ENCODE measurements at regions of chr7 and their contacts with region 1.

Region 1: DNA sequence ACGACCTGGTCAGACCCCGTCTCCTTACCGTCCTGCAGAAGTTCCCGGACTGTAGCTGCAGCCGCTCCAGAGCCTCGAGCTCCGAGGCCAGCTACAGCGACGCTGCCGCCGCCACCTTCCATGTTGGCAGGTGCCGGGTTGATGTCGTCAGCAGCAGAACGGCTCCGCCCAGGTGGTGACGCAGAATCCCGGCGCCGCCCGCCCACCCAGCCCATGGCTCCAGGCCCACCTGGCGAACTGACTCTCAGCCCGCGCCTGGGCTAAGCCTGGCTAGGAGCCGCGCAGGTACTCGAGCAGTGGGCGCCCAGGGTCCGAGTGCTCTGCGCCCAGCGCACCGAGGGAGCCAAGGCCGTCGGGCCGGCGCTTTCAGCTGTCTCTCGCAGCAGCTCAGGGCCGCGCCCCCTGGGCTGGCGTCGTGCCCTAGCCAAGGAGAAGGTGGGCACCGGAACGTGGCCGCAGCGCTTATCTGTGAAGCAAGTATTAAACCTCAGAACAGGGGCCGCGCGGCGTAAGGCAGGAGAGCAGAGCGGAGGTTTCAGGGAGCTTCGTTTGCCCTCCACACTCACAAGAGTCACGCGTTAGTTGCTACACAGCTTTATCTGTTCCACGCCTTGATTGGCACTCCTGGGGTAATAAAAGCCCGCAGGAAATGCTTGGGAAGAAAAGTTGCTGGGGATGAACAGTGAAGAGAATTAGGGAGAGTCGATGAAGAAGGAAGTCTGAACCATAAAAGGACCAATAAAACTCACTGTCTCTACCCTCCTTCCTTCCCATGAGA is at the starts of genes COG5 and DUS4L:
- DNase-seq: peak; percentile 75
- H3K4me3 Mint-ChIP-seq: peak within 1 kb of the TSS; percentile 89
- H3K27ac Mint-ChIP-seq: peak within 1 kb of the TSS; percentile 93
- H3K4me1 Mint-ChIP-seq: peaks cover 62% of the 10 kb centered on the region
- H3K27me3 Mint-ChIP-seq: no peaks in the 10 kb centered on the region
- total RNA-seq, gene COG5: 36.5 and 39.1 TPM in 2 replicates
- total RNA-seq, gene DUS4L: 11.8 and 13.5 TPM in 2 replicates

Region 2: GRCh38 chr7:107543338-107543993 is 20.5 kb before region 1 on chr7:
- intact Hi-C with region 1: no loop called
- DNase-seq: no peak
- H3K4me3 Mint-ChIP-seq: no peak overlapping the region
- H3K27ac Mint-ChIP-seq: no peak overlapping the region
- H3K4me1 Mint-ChIP-seq: no peaks in the 10 kb centered on the region
- H3K27me3 Mint-ChIP-seq: no peaks in the 10 kb centered on the region

Region 3: GRCh38 chr7:107579885-107580715 is 16.1 kb after region 1 on chr7 and contains the start of gene BCAP29:
- intact Hi-C with region 1: loop called (anchors 1 kb)
- DNase-seq: peak; percentile 65
- H3K4me3 Mint-ChIP-seq: peak within 1 kb of the TSS; percentile 89
- H3K27ac Mint-ChIP-seq: peak within 1 kb of the TSS; percentile 86
- H3K4me1 Mint-ChIP-seq: peaks cover 26% of the 10 kb centered on the region
- H3K27me3 Mint-ChIP-seq: no peaks in the 10 kb centered on the region
- total RNA-seq, gene BCAP29: 43.5 and 44.5 TPM in 2 replicates

Region 4: DNA sequence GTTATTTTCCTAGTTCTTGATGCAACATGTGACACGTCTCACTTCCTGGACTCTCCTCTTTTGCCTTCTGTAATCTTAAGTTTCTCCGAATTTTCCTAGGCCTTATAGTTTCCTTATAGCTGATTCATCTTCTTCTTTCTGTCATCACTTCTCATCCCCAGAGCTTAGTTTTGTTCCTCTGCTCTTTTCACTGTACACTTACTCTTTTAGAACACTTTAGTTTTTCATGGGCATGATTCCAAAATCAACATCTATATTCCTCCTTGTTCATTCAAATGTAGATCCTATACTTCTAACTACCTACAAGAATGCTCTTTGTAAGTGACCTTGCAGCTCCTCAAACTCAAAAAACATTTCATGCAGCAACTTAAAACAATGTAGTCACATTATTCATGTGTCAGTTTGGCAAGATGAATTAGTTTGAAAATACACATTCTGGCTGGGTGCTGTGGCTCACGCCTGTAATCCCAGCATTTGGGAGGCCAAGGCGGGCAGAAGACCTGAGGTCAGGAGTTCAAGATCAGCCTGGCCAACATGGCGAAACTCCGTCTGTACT is 252.1 kb after region 1 on chr7:
- intact Hi-C with region 1: loop called (anchors 10 kb)
- DNase-seq: no peak
- H3K4me3 Mint-ChIP-seq: peak overlapping the region; percentile 19
- H3K27ac Mint-ChIP-seq: peak overlapping the region; percentile 72
- H3K4me1 Mint-ChIP-seq: peaks cover 25% of the 10 kb centered on the region
- H3K27me3 Mint-ChIP-seq: no peaks in the 10 kb centered on the region

Region 5: GRCh38 chr7:108525985-108526767 is 962.2 kb after region 1 on chr7 and contains the start of gene PNPLA8:
- intact Hi-C with region 1: loop called (anchors 1 kb)
- DNase-seq: peak; percentile 100
- H3K4me3 Mint-ChIP-seq: peak within 1 kb of the TSS; percentile 92
- H3K27ac Mint-ChIP-seq: peak within 1 kb of the TSS; percentile 97
- H3K4me1 Mint-ChIP-seq: peaks cover 34% of the 10 kb centered on the region
- H3K27me3 Mint-ChIP-seq: peaks cover 3% of the 10 kb centered on the region
- total RNA-seq, gene PNPLA8: 16.8 and 18.3 TPM in 2 replicates